ENCODE measurements at regions of chr5 and their contacts with region 1.

Region 1: DNA sequence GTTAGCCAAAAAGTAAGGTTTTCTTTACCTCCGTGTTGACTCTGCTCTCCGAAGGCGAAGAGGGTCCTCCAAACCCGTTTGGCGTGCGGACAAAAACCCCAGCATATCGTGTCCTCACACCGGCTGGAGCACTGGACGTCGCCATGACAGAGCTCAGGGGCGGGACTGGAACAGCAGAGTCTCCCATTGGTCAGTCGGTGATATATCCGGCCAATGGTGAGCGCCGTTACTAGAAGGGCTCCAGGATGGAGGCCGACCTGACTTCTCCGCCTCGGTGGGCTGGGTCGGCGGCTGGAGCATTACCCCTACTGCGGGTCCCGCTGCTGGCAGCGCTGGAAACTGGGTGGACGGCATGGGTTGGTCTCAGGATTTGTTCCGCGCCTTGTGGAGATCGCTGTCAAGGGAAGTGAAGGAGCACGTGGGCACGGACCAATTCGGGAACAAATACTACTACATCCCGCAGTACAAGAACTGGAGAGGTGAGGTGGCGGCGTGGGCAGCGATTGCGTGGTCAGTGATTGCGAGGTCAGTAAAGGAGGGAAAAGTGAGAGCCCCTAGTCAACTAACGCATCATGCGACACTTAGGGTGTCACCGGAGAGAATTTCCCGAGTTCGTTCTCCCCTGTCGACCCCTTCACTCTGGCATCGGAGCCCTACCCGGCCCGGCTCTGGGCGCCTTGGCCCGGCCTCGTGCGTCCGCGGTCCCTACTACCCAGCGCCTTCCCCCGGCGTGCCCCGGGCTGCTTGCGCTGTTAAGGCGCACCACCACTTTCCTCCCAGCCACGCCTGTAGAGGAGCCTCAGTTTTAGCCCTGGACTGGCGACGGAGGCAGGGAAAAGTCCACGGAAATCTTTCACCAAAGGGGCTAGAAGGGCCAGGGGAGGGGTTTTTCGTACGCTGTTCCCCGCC is at the starts of genes ERCC8 and NDUFAF2:
- DNase-seq: peak; percentile 80 to 91 (median 89)
- H3K4me3 ChIP-seq: peak within 1 kb of the TSS; percentile 58 to 95 (median 85)
- H3K4me3 Mint-ChIP-seq: no peak within 1 kb of the TSS
- H3K27ac ChIP-seq: peak within 1 kb of the TSS; percentile 67 to 92
- H3K27ac Mint-ChIP-seq: peak within 1 kb of the TSS in 1 of 7 donors; percentile 67
- H3K4me1 ChIP-seq: peaks cover 25 to 26% of the 10 kb centered on the region in 2 donors
- H3K4me1 Mint-ChIP-seq: peaks cover 16% of the 10 kb centered on the region
- H3K27me3 ChIP-seq: no peaks in the 10 kb centered on the region
- H3K27me3 Mint-ChIP-seq: no peaks in the 10 kb centered on the region
- CTCF ChIP-seq: no peak
- polyA plus RNA-seq, gene ERCC8: 5.5 to 16.8 (median 10.6) TPM
- polyA plus RNA-seq, gene NDUFAF2: 5.9 to 29.5 (median 25.0) TPM

Region 2: DNA sequence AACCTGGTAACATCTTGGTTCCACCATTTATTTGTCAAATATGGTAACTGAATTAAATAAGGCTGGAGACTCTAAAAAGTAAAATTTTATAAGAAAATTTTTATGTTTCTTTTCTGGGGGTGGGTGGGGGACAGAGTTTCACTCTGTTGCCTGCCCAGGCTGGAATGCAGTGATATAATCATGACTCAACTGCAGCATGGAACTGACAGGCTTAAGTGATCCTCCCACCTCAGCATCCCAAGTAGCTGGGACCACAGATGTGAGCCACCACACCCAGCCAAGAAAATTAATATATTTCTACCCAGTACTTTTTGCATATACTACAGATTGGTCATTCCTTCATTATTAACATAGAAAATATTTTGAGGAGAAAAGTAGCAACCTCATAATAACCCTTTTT is 462.1 kb before region 1 on chr5:
- intact Hi-C with region 1: no loop called
- DNase-seq: no peak
- H3K4me3 ChIP-seq: no peak overlapping the region
- H3K4me3 Mint-ChIP-seq: no peak overlapping the region
- H3K27ac ChIP-seq: no peak overlapping the region
- H3K27ac Mint-ChIP-seq: peak overlapping the region in 1 of 7 donors; percentile 4
- H3K4me1 ChIP-seq: no peaks in the 10 kb centered on the region
- H3K4me1 Mint-ChIP-seq: no peaks in the 10 kb centered on the region
- H3K27me3 ChIP-seq: no peaks in the 10 kb centered on the region
- H3K27me3 Mint-ChIP-seq: peaks cover 0 to 2% (median 0%) of the 10 kb centered on the region in 3 donors
- CTCF ChIP-seq: no peak

Region 3: DNA sequence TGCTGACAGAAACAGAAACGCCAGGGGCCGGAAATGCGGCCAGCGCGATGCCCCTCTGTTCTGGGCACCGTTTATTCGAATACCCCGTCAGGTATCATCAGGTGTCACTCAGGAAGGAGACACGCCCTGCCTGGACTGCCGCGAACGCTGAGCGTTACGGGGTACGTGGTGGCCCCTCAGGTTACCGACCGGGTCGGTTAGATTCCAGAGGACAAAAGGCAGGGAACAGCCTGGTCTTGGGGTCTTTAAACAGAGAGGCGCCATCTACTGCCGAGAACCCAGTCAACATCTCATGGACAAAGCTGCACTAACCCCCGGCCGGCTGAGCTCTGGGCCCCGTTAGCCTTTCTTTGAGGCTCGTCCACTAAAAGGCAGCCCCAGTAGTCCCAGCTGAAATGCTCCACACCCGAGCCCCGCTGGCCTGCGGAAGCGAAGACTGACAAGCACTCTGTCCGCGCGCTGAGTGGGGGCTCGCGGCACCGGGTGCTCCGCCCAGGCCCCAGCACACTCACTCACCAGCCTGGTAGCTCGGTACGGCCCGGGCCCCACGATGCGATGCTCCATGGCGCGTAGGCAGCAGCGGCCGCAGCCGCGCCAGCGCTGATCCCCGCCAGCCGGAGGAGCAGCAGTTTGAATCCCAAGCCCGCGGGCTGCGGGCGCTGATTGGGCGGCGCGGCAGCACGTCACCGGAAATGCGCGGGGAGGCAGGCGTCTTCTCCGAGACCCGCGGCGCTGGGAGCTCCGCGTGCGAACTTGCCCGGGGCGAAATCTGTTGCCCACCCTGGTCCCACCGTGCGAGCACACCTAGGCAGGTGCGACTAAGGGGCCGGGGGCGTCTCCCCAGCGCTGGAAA is 245.4 kb before region 1 on chr5 and contains the start of gene DEPDC1B:
- intact Hi-C with region 1: loop called in 1 of 2 experiments (anchors 5 kb)
- DNase-seq: peak; percentile 69 to 78 (median 69)
- H3K4me3 ChIP-seq: peak within 1 kb of the TSS; percentile 79 to 96 (median 91)
- H3K4me3 Mint-ChIP-seq: peak within 1 kb of the TSS; percentile 97
- H3K27ac ChIP-seq: peak within 1 kb of the TSS; percentile 65 to 76
- H3K27ac Mint-ChIP-seq: peak within 1 kb of the TSS; percentile 50 to 91 (median 81)
- H3K4me1 ChIP-seq: peaks cover 18 to 21% of the 10 kb centered on the region in 2 donors
- H3K4me1 Mint-ChIP-seq: peaks cover 32% of the 10 kb centered on the region
- H3K27me3 ChIP-seq: no peaks in the 10 kb centered on the region
- H3K27me3 Mint-ChIP-seq: peaks cover 2 to 13% (median 5%) of the 10 kb centered on the region in 3 donors
- CTCF ChIP-seq: peak; percentile 8
- polyA plus RNA-seq, gene DEPDC1B: 0.11 to 0.56 (median 0.14) TPM

Region 4: DNA sequence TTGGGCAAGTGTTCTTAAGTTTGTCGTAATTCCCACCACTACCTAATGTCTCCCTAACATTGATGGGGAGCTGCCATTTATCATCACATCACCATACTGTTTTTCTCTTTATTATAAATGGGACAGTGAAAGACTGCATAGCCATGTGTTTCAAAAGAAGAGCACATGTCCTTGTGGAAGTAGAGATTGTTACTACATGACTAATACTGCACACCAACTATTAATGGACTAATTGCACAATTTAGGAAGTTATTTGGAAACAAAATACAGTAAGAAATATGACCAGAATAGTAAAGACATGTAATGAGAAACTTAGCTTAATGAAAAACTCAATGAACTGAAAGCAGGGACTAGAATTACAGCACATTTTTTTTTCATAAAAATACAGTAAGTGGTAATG is 89.1 kb before region 1 on chr5:
- intact Hi-C with region 1: no loop called
- DNase-seq: peak; percentile 3 to 40 (median 13)
- H3K4me3 ChIP-seq: no peak overlapping the region
- H3K4me3 Mint-ChIP-seq: no peak overlapping the region
- H3K27ac ChIP-seq: no peak overlapping the region
- H3K27ac Mint-ChIP-seq: no peak overlapping the region
- H3K4me1 ChIP-seq: peaks cover 0 to 6% of the 10 kb centered on the region in 2 donors
- H3K4me1 Mint-ChIP-seq: peaks cover 9% of the 10 kb centered on the region
- H3K27me3 ChIP-seq: no peaks in the 10 kb centered on the region
- H3K27me3 Mint-ChIP-seq: no peaks in the 10 kb centered on the region
- CTCF ChIP-seq: no peak

Region 5: DNA sequence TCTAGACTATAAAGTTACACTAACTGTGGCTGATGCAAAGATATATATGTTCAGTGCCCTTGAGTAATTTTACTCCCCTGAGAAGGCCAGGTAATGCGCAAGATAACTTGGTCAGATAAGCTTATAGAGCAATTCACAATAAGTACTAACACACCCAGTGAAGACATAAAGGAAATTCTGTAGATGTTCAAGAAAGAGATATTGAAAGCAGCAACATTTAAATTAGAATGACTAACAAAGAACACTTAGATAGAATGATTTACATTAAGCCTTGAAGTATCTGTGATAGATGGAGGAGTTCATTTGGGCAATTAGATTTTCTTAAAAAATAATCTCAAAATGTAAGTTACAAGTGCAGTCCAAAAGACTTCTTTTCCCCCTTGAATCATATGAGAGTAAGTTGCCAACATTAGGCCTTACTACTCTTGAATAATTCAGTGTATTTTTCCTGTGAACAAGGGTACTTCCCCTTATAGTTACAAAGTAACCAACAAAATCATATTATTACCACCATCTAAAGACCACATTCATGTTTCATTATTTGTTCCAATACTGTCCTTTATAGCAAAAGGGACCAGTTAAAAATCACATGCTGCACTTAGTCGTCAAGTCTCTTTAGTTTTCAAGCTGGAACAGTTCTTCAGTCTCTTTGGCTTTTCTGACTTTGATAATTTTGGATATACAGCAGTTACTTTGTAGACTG is 56.6 kb before region 1 on chr5:
- intact Hi-C with region 1: no loop called
- DNase-seq: no peak
- H3K4me3 ChIP-seq: no peak overlapping the region
- H3K4me3 Mint-ChIP-seq: no peak overlapping the region
- H3K27ac ChIP-seq: no peak overlapping the region
- H3K27ac Mint-ChIP-seq: no peak overlapping the region
- H3K4me1 ChIP-seq: no peaks in the 10 kb centered on the region
- H3K4me1 Mint-ChIP-seq: no peaks in the 10 kb centered on the region
- H3K27me3 ChIP-seq: no peaks in the 10 kb centered on the region
- H3K27me3 Mint-ChIP-seq: peaks cover 0 to 1% (median 0%) of the 10 kb centered on the region in 3 donors
- CTCF ChIP-seq: no peak

Region 6: GRCh38 chr5:61000887-61001286 is 55.7 kb after region 1 on chr5:
- intact Hi-C with region 1: no loop called
- DNase-seq: no peak
- H3K4me3 ChIP-seq: no peak overlapping the region
- H3K4me3 Mint-ChIP-seq: no peak overlapping the region
- H3K27ac ChIP-seq: no peak overlapping the region
- H3K27ac Mint-ChIP-seq: peak overlapping the region in 1 of 7 donors; percentile 74
- H3K4me1 ChIP-seq: no peaks in the 10 kb centered on the region
- H3K4me1 Mint-ChIP-seq: no peaks in the 10 kb centered on the region
- H3K27me3 ChIP-seq: no peaks in the 10 kb centered on the region
- H3K27me3 Mint-ChIP-seq: peaks cover 0 to 2% (median 0%) of the 10 kb centered on the region in 3 donors
- CTCF ChIP-seq: no peak